ENCODE measurements at regions of chr17 and their contacts with region 1.

Region 1: GRCh38 chr17:50541716-50542688 is 5.0 kb upstream of the SPATA20 start:
- DNase-seq: peak; percentile 91
- ATAC-seq: peak; percentile 85
- H3K4me3 ChIP-seq: peak overlapping the region; percentile 21 to 73 (median 52)
- H3K4me3 Mint-ChIP-seq: peak overlapping the region; percentile 95
- H3K27ac ChIP-seq: peak overlapping the region in 1 of 2 donors; percentile 41
- H3K27ac Mint-ChIP-seq: peak overlapping the region; percentile 79
- H3K4me1 ChIP-seq: peaks cover 16 to 22% of the 10 kb centered on the region in 2 donors
- H3K4me1 Mint-ChIP-seq: peaks cover 17% of the 10 kb centered on the region
- H3K27me3 ChIP-seq: peaks cover 0 to 15% (median 5%) of the 10 kb centered on the region in 4 experiments
- H3K27me3 Mint-ChIP-seq: peaks cover 7% of the 10 kb centered on the region
- CTCF ChIP-seq: peak; percentile 57

Region 2: GRCh38 chr17:50423553-50424159 is 118.3 kb before region 1 on chr17:
- CTCF ChIA-PET with region 1: no interaction called
- POLR2A ChIA-PET with region 1: no interaction called
- intact Hi-C with region 1: no loop called
- DNase-seq: no peak
- ATAC-seq: no peak
- H3K4me3 ChIP-seq: no peak overlapping the region
- H3K4me3 Mint-ChIP-seq: peak overlapping the region; percentile 49
- H3K27ac ChIP-seq: no peak overlapping the region
- H3K27ac Mint-ChIP-seq: peak overlapping the region; percentile 56
- H3K4me1 ChIP-seq: peaks cover 33 to 47% of the 10 kb centered on the region in 2 donors
- H3K4me1 Mint-ChIP-seq: peaks cover 53% of the 10 kb centered on the region
- H3K27me3 ChIP-seq: no peaks in the 10 kb centered on the region
- H3K27me3 Mint-ChIP-seq: no peaks in the 10 kb centered on the region
- CTCF ChIP-seq: no peak

Region 3: DNA sequence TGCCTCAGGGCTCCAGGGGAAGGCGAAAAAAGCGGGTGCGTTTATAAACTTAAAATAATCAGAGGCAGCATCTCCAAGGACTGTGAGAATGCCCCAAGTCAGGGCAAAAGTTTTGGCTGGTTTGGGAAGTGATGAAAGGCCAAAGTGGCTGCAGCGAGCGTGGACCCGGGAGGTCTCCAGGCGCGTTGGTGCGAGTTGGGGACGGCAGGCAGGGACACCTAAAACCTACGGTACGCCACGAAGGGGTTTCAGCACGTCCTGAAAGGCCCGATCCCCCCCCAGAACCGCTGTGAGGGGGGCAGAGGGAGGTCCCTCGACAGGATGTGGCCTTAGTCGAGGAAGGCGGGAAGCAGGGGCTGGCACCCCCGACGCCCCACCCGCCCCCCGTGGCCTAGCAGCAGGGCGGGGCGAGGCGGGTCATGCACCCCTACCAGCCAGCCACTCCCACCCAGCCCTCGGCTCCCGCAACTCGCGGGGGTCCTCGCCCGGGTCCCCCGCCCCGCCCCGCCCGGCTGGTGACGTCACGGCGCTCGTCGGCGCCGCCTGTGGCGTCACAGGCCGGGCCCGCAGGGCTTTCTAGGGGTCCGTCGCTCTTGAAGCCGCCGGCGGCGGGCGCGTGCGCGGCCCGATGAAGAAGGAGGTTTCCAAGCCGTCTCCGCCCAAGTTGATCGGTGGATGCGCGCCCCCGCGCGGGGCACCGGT is 34.0 kb before region 1 on chr17 and contains the start of gene MYCBPAP:
- CTCF ChIA-PET with region 1: interaction called, 4 read pairs
- POLR2A ChIA-PET with region 1: interaction called, 3 read pairs
- intact Hi-C with region 1: loop called (anchors 1 kb)
- DNase-seq: peak; percentile 85
- ATAC-seq: peak; percentile 84
- H3K4me3 ChIP-seq: peak within 1 kb of the TSS; percentile 41 to 79 (median 54)
- H3K4me3 Mint-ChIP-seq: peak within 1 kb of the TSS; percentile 84
- H3K27ac ChIP-seq: peak within 1 kb of the TSS; percentile 1 to 19
- H3K27ac Mint-ChIP-seq: peak within 1 kb of the TSS; percentile 83
- H3K4me1 ChIP-seq: peaks cover 9 to 19% of the 10 kb centered on the region in 2 donors
- H3K4me1 Mint-ChIP-seq: peaks cover 28% of the 10 kb centered on the region
- H3K27me3 ChIP-seq: peaks cover 0 to 8% (median 3%) of the 10 kb centered on the region in 4 experiments
- H3K27me3 Mint-ChIP-seq: no peaks in the 10 kb centered on the region
- CTCF ChIP-seq: no peak
- total RNA-seq, gene MYCBPAP: 5.1 and 5.5 TPM in 2 replicates

Region 4: GRCh38 chr17:50560185-50560824 is 18.3 kb after region 1 on chr17 and contains the start of gene CACNA1G:
- CTCF ChIA-PET with region 1: interaction called, 5 read pairs
- POLR2A ChIA-PET with region 1: interaction called, 3 read pairs
- intact Hi-C with region 1: loop called (anchors 1 kb)
- DNase-seq: peak; percentile 90
- ATAC-seq: peak; percentile 89
- H3K4me3 ChIP-seq: peak within 1 kb of the TSS in 4 of 5 experiments; percentile 43 to 70 (median 60)
- H3K4me3 Mint-ChIP-seq: peak within 1 kb of the TSS; percentile 87
- H3K27ac ChIP-seq: no peak within 1 kb of the TSS
- H3K27ac Mint-ChIP-seq: no peak within 1 kb of the TSS
- H3K4me1 ChIP-seq: peaks cover 34 to 40% of the 10 kb centered on the region in 2 donors
- H3K4me1 Mint-ChIP-seq: peaks cover 30% of the 10 kb centered on the region
- H3K27me3 ChIP-seq: peaks cover 0 to 85% (median 37%) of the 10 kb centered on the region in 4 experiments
- H3K27me3 Mint-ChIP-seq: peaks cover 29% of the 10 kb centered on the region
- CTCF ChIP-seq: no peak
- total RNA-seq, gene CACNA1G: 0.05 and 0.12 TPM in 2 replicates

Region 5: DNA sequence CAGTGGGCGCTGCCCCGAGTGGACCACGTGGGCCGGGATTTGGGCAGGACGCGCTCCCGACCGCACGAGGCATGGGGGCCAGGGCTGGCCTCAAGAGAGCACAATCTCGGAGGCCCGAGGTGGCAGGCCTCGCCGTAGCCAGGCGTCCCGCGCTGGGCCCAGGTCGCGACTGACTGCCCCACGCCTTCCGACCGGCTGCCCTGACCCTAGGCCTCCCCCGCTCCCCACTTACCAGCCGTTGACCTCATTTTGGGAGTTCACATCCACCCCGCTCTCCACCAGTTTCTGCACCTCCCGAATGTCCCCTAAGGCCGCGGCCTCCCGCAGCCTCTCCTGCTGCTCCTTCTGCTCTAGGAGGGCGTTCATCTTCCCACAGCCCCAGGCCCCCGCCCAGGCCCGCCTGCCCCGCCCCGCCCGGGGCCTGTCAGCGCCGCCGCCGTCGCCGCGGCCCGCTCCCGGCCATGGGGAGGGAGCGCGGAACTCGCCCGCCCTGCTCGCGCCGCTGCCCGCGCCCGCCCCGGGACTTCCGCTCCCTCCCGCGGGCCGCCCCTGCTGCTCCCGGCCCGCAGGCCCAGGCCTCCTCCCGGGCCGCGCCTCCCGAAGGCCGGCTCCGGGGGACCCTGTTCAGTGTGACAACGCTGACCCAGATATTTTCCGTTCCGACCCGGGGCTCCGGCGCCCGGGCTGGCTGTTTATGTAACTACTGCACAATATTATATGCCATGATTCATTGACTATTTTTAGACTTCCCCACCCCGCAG is 165.5 kb after region 1 on chr17 and contains the start of gene ANKRD40:
- CTCF ChIA-PET with region 1: no interaction called
- POLR2A ChIA-PET with region 1: no interaction called
- intact Hi-C with region 1: loop called (anchors 5 kb)
- DNase-seq: peak; percentile 95
- ATAC-seq: peak; percentile 78
- H3K4me3 ChIP-seq: peak within 1 kb of the TSS; percentile 57 to 87 (median 80)
- H3K4me3 Mint-ChIP-seq: peak within 1 kb of the TSS; percentile 96
- H3K27ac ChIP-seq: peak within 1 kb of the TSS; percentile 92 to 99
- H3K27ac Mint-ChIP-seq: peak within 1 kb of the TSS; percentile 97
- H3K4me1 ChIP-seq: peaks cover 25 to 30% of the 10 kb centered on the region in 2 donors
- H3K4me1 Mint-ChIP-seq: peaks cover 43% of the 10 kb centered on the region
- H3K27me3 ChIP-seq: no peaks in the 10 kb centered on the region
- H3K27me3 Mint-ChIP-seq: no peaks in the 10 kb centered on the region
- CTCF ChIP-seq: no peak
- total RNA-seq, gene ANKRD40: 35.3 and 43.1 TPM in 2 replicates

Region 6: DNA sequence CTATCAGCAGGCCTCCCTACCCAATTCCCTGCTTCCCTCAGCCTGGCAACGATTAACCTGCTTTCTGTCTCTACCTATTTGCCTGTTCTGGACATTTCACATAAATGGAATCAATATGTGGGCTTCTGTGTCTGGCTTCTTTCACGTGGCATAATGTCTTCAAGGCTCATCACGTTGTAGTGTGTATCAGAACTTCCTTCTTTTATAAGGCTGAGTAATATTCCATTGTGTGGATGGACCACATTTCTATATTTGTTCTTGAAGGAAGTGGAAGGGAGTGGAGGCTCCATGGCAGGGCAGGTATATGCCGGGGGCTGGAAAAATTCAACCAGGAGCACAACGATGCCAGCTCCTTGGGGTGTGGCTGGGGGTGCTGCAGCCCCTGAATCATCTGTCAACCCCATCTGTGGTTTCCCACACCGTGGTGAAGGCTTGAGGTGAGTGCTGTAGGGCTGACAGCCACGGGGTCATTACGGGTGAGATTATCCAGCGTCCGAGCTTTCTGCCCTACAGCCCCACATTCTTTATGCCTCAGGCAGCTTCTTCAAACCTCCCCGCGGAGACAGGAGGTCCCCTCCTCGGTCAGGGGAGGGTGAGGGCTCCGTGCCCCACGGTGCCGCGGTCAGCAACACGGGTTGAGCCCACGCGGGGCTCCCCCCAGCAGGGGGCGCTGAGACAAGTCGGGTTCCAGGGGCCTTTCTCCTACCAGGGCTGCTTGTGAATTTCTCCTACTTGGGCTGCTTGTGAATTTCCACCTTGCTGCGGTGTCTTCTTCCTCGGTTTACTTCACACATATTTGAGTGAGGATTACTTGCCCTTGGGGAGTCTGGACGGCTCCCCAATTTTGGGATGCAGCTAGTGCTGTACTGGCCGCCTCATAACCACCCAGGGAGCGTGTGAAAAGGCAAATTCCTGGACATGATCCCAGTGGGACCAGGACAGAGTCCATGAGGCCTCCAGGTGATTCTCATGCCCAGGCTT is 275.1 kb after region 1 on chr17:
- CTCF ChIA-PET with region 1: no interaction called
- POLR2A ChIA-PET with region 1: interaction called, 15 read pairs
- intact Hi-C with region 1: no loop called
- DNase-seq: peak; percentile 66
- ATAC-seq: peak; percentile 51
- H3K4me3 ChIP-seq: no peak overlapping the region
- H3K4me3 Mint-ChIP-seq: no peak overlapping the region
- H3K27ac ChIP-seq: no peak overlapping the region
- H3K27ac Mint-ChIP-seq: no peak overlapping the region
- H3K4me1 ChIP-seq: peaks cover 0 to 7% of the 10 kb centered on the region in 2 donors
- H3K4me1 Mint-ChIP-seq: peaks cover 5% of the 10 kb centered on the region
- H3K27me3 ChIP-seq: peaks cover 0 to 7% (median 2%) of the 10 kb centered on the region in 4 experiments
- H3K27me3 Mint-ChIP-seq: peaks cover 34% of the 10 kb centered on the region
- CTCF ChIP-seq: peak; percentile 85

Measured in B cell (primary cell).